ENCODE measurements at regions of chr17 and their contacts with region 1.

Region 1: GRCh38 chr17:68247445-68248198 is at the start of gene AMZ2:
- DNase-seq: peak; percentile 88 to 94 (median 94)
- H3K4me3 ChIP-seq: peak within 1 kb of the TSS; percentile 61 to 82 (median 77)
- H3K4me3 Mint-ChIP-seq: peak within 1 kb of the TSS; percentile 83 to 92
- H3K27ac ChIP-seq: peak within 1 kb of the TSS; percentile 97
- H3K27ac Mint-ChIP-seq: peak within 1 kb of the TSS; percentile 91 to 99 (median 97)
- H3K4me1 ChIP-seq: peaks cover 29 to 33% of the 10 kb centered on the region in 2 donors
- H3K4me1 Mint-ChIP-seq: peaks cover 30% of the 10 kb centered on the region
- H3K27me3 ChIP-seq: no peaks in the 10 kb centered on the region
- H3K27me3 Mint-ChIP-seq: peaks cover 2 to 10% (median 2%) of the 10 kb centered on the region in 3 donors
- CTCF ChIP-seq: no peak
- polyA plus RNA-seq, gene AMZ2: 34.0 to 67.6 (median 67.2) TPM

Region 2: GRCh38 chr17:67532326-67532871 is 715.2 kb before region 1 on chr17:
- intact Hi-C with region 1: no loop called
- DNase-seq: no peak
- H3K4me3 ChIP-seq: no peak overlapping the region
- H3K4me3 Mint-ChIP-seq: no peak overlapping the region
- H3K27ac ChIP-seq: no peak overlapping the region
- H3K27ac Mint-ChIP-seq: no peak overlapping the region
- H3K4me1 ChIP-seq: no peaks in the 10 kb centered on the region
- H3K4me1 Mint-ChIP-seq: no peaks in the 10 kb centered on the region
- H3K27me3 ChIP-seq: no peaks in the 10 kb centered on the region
- H3K27me3 Mint-ChIP-seq: peaks cover 0 to 3% (median 0%) of the 10 kb centered on the region in 3 donors
- CTCF ChIP-seq: no peak

Region 3: DNA sequence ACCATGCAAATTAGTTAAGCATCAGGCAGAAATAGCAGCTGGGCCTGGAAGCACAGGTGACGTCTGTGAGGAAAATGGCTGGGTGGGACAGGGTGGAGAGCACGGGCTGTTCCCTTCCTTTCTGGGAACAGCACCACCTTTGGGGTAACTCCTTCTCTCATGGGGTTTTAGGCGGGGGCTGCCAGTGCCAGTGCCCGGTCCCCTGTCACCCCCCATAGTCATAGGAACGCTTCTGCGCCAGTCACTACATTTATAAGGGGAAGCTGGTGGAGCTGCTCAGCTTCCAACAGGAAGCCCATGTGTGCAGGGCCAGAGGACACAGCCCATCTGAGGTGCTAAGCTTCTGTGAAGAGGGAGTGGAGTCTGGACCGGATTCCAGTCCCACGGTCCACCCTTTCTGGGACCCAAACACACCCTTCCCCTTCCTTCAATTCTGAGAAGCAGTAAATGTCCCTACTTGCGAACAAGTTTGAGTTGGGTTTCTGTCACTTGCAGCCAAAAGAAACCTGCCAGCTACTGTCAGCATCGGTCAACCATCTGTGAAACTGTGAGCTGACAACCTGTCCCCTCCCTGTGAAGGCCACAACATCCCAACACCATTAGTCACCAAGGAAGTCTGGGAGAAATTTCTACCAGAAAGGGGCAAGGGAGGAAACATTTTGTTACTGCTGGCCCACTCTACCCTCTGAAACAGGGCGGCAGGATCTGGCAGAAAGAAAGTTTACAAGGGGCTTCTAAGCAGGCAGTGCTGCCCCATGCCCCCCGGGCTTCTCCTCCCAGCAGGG is 85.8 kb before region 1 on chr17:
- intact Hi-C with region 1: no loop called
- DNase-seq: no peak
- H3K4me3 ChIP-seq: no peak overlapping the region
- H3K4me3 Mint-ChIP-seq: no peak overlapping the region
- H3K27ac ChIP-seq: no peak overlapping the region
- H3K27ac Mint-ChIP-seq: peak overlapping the region in 1 of 7 donors; percentile 10
- H3K4me1 ChIP-seq: no peaks in the 10 kb centered on the region
- H3K4me1 Mint-ChIP-seq: peaks cover 5% of the 10 kb centered on the region
- H3K27me3 ChIP-seq: no peaks in the 10 kb centered on the region
- H3K27me3 Mint-ChIP-seq: peaks cover 0 to 3% (median 0%) of the 10 kb centered on the region in 3 donors
- CTCF ChIP-seq: no peak

Region 4: GRCh38 chr17:68205251-68205807 is 42.3 kb before region 1 on chr17:
- intact Hi-C with region 1: loop called (anchors 2 to 5 kb)
- DNase-seq: peak; percentile 84 to 88 (median 88)
- H3K4me3 ChIP-seq: peak overlapping the region; percentile 69 to 93 (median 80)
- H3K4me3 Mint-ChIP-seq: peak overlapping the region; percentile 90
- H3K27ac ChIP-seq: peak overlapping the region; percentile 49 to 74
- H3K27ac Mint-ChIP-seq: peak overlapping the region in 6 of 7 donors; percentile 75 to 92 (median 84)
- H3K4me1 ChIP-seq: peaks cover 25 to 34% of the 10 kb centered on the region in 2 donors
- H3K4me1 Mint-ChIP-seq: peaks cover 24% of the 10 kb centered on the region
- H3K27me3 ChIP-seq: peaks cover 7 to 32% of the 10 kb centered on the region in 2 donors
- H3K27me3 Mint-ChIP-seq: peaks cover 37 to 58% (median 45%) of the 10 kb centered on the region in 3 donors
- CTCF ChIP-seq: peak; percentile 97

Region 5: DNA sequence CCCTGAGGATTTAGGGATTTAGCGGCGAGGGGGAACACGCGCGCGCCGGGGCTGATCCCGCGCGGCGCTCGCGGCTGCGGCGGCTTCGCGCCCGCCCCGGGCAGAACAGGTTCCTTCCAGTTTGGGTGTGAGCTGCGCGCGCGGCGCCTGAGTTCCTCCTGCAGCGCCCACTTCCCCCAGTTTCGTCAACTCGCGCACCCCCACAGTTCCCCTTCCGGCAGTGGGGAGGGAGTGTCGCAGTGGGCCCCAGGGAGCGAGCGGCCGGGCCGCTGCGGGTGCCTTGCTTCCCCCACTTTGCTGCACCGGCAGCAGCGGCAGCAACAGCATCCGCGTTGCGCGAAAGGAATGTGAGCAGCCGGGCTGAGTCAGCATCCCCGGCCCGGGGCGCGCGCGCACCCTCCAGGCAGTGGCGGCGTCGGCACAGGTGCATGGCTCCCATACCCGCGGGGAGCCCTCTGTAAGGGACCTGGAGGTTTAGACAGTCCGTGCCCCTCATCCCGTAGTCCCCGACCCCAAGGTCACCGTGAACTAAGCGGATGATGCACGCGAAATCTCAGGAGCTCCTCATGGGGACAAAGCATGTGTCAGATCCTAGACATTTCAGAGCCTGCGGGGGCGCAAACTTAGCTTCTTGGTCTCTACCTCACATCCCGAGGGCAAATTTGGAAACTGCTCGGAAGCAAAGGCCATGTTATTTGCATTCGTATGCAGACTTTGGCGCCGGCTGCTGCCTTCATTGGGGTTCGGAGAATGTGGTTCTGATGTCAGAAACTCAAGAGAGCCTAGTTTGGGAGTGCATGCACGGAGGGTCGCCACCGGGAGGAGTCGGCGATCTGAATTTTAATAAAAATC is 44.4 kb after region 1 on chr17:
- intact Hi-C with region 1: loop called in 1 of 2 experiments (anchors 5 kb)
- DNase-seq: peak; percentile 96 to 99 (median 99)
- H3K4me3 ChIP-seq: peak overlapping the region; percentile 55 to 97 (median 87)
- H3K4me3 Mint-ChIP-seq: peak overlapping the region; percentile 77 to 87
- H3K27ac ChIP-seq: peak overlapping the region; percentile 96 to 97
- H3K27ac Mint-ChIP-seq: peak overlapping the region; percentile 91 to 97 (median 96)
- H3K4me1 ChIP-seq: peaks cover 76 to 82% of the 10 kb centered on the region in 2 donors
- H3K4me1 Mint-ChIP-seq: peaks cover 66% of the 10 kb centered on the region
- H3K27me3 ChIP-seq: no peaks in the 10 kb centered on the region
- H3K27me3 Mint-ChIP-seq: peaks cover 0 to 2% (median 2%) of the 10 kb centered on the region in 3 donors
- CTCF ChIP-seq: no peak